ENCODE measurements at regions of chr11 and their contacts with region 1.

Region 1: DNA sequence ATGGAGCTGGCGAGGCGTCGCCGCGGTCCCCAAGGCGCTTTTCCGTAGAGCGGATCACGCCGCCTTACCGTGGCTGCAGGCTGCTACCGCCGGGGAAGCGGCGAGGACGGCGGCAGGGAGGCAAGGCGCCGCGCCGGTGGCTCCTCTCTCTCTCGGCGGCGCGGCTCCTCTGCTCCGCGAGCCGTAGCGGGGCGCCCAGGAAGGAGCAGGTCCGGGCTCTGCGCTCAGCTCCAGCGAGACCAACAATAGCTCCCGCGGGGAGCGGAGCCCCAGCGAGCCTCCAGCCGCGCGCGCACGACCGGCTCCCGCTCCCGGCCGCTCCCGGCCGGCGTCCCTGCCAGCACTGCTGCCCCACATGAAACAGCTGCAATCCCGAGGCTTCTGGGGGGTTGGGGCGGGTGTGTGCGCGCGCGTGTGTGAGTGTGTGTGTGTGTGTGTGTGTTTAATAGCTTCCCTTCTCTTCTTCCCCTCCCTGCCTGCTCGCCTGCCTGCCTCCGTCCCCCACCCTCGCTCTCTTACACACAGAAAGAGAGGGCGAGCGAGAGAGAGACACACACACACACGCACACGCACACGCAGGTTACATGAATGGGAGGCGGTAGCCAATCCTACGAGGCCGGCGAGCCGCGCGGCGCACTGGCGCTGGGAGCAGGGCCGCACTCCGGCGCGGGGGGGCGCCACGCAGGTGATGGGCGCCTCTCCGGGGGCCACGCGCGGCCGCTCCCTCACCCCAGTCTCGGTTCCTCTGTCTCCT is at the start of gene TENM4:
- DNase-seq: peak; percentile 72
- H3K4me3 ChIP-seq: peak within 1 kb of the TSS; percentile 71 to 95 (median 88)
- H3K27ac ChIP-seq: peak within 1 kb of the TSS; percentile 43
- H3K4me1 ChIP-seq: peaks cover 16% of the 10 kb centered on the region
- H3K27me3 ChIP-seq: no peaks in the 10 kb centered on the region
- CTCF ChIP-seq: peak; percentile 40 to 47
- total RNA-seq, gene TENM4: 4.8 to 26.5 TPM

Region 2: DNA sequence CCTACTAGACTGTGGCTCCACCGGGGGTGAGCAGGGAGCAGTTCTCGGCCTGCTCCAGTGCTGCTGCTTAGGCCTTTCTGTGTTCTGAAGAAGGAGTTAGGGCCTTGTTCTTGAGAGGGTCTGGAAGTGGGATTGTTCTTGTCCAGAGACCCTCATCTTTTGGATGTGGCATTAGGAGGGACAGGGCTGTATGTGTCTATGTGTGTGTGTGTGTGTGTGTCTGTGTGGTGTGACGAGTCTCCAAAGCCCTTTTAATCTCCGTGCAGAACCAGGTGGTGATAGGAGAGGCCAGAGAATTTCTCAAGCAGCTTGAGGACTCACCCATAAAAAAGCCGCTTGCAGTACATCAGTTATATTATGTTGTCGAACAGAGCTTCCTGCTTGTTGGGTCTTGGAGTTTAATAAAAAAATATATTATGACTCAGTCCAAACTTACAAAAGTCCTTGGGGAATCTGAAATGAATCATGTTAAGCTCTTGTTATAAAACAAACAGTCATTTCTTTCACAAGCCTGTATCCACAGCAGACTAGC is 196.3 kb before region 1 on chr11:
- CTCF ChIA-PET with region 1: no interaction called
- dilution Hi-C with region 1: no loop called
- in situ Hi-C with region 1: no loop called
- intact Hi-C with region 1: loop called (anchors 5 kb)
- DNase-seq: peak; percentile 94
- H3K4me3 ChIP-seq: no peak overlapping the region
- H3K27ac ChIP-seq: peak overlapping the region; percentile 79
- H3K4me1 ChIP-seq: peaks cover 19% of the 10 kb centered on the region
- H3K27me3 ChIP-seq: no peaks in the 10 kb centered on the region
- CTCF ChIP-seq: no peak

Region 3: DNA sequence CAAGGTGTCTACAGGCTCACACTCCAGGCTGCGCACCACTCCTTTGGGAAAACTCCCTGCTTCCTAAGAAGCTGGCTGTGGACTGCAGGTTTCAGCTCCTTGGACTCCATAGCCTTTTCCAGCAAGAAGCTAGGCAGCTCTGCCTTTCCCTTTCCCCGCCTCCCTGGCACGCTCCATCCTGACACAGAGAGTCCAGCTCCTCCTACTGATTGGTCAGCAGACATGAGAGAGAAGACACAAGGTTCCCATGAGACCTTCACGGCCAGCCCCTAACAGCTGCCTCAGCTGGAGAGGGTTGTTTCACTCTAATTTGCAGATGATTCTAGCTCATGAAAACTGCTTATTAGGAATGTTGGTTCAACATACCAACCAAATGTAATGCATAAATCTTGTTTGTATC is 27.4 kb before region 1 on chr11:
- CTCF ChIA-PET with region 1: no interaction called
- dilution Hi-C with region 1: no loop called
- in situ Hi-C with region 1: no loop called
- intact Hi-C with region 1: loop called (anchors 2 kb)
- DNase-seq: peak; percentile 67
- H3K4me3 ChIP-seq: no peak overlapping the region
- H3K27ac ChIP-seq: no peak overlapping the region
- H3K4me1 ChIP-seq: peaks cover 60% of the 10 kb centered on the region
- H3K27me3 ChIP-seq: no peaks in the 10 kb centered on the region
- CTCF ChIP-seq: no peak

Measured in mammary epithelial cell (primary cell).